ENCODE measurements at regions of chr20 and their contacts with region 1.

Region 1: GRCh38 chr20:59087829-59088433 is 45.3 kb upstream of the PRELID3B start:
- DNase-seq: peak; percentile 84
- H3K4me3 Mint-ChIP-seq: no peak overlapping the region
- H3K27ac Mint-ChIP-seq: no peak overlapping the region
- H3K4me1 Mint-ChIP-seq: peaks cover 3% of the 10 kb centered on the region
- H3K27me3 Mint-ChIP-seq: peaks cover 18% of the 10 kb centered on the region

Region 2: GRCh38 chr20:59120491-59120890 is 32.6 kb after region 1 on chr20:
- CTCF ChIA-PET with region 1: interaction called, 19 read pairs
- POLR2A ChIA-PET with region 1: no interaction called
- DNase-seq: peak; percentile 37
- H3K4me3 Mint-ChIP-seq: no peak overlapping the region
- H3K27ac Mint-ChIP-seq: no peak overlapping the region
- H3K4me1 Mint-ChIP-seq: peaks cover 52% of the 10 kb centered on the region
- H3K27me3 Mint-ChIP-seq: peaks cover 15% of the 10 kb centered on the region

Region 3: GRCh38 chr20:59177261-59178250 is 89.6 kb after region 1 on chr20:
- CTCF ChIA-PET with region 1: interaction called, 11 read pairs
- POLR2A ChIA-PET with region 1: no interaction called
- DNase-seq: peak; percentile 63
- H3K4me3 Mint-ChIP-seq: peak overlapping the region; percentile 44
- H3K27ac Mint-ChIP-seq: peak overlapping the region; percentile 84
- H3K4me1 Mint-ChIP-seq: peaks cover 80% of the 10 kb centered on the region
- H3K27me3 Mint-ChIP-seq: no peaks in the 10 kb centered on the region

Region 4: DNA sequence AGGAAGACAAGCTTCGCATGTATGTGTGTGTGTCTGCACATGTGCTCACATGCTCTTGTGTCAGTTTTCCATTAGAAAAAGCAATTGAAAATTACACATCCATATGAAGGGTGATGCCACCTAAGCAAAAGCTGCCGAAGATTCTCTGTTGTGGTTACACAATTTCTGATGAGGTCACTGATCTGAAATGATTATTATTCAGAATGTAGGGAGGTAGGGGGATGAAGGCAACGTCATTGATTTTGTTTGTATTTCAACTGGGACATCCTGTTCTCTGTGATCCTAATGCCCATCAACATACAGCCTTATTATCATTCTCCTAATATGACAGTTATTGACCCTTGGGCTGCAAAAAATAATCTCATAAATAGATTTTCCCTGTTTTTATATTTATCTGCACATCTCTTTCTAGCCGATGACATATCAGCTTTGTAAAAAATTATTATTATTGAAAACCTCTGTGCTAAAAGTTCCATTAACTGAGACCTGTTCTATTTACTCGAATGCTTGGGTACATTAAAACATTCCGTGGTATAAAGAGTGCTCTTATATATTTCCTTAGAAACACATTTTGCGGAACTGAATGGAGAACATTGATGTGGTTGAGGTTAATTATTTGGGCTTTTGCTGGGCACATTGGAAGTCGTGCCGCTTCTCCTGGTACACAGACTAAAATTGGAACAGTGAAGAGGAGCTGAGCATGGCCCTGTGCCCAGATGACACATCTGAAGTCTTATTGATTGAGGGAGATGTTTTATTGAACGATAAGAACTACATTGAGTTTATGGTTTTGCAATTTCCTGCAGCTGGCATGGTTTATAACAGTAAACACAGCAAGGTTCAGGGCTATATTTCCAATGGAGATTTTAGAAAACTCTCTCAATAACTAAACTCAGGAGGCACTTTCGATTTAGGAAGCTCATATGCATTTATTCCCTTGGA is 126.9 kb after region 1 on chr20:
- CTCF ChIA-PET with region 1: interaction called, 137 read pairs
- POLR2A ChIA-PET with region 1: no interaction called
- DNase-seq: no peak
- H3K4me3 Mint-ChIP-seq: no peak overlapping the region
- H3K27ac Mint-ChIP-seq: no peak overlapping the region
- H3K4me1 Mint-ChIP-seq: no peaks in the 10 kb centered on the region
- H3K27me3 Mint-ChIP-seq: no peaks in the 10 kb centered on the region

Region 5: DNA sequence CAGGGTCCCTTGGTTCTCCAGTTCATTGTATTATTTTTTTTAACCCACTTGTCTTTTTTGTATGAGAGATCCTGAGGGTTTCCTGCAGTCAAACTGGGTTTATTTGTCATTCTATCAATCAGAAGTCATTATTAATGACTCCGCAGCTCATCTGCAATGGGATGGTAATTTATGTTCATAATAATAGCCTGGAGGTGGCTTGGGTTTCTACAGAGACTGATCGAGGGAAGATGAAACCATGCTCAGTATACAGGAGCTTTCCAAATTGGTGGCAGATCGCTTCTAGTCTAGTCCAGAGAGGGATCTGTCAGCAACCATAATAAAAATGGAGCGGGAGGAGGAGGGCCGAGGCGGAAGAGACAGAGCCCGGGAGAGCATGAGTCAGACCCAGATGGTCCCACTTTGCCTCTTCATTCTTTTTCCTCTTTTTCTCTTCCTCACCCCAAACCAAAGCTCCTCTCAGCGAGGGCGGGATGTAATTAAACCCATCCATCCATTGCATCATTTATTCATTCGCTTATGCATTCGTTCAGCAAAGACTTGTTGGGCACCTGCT is 235.0 kb after region 1 on chr20:
- CTCF ChIA-PET with region 1: no interaction called
- POLR2A ChIA-PET with region 1: no interaction called
- DNase-seq: no peak
- H3K4me3 Mint-ChIP-seq: no peak overlapping the region
- H3K27ac Mint-ChIP-seq: no peak overlapping the region
- H3K4me1 Mint-ChIP-seq: no peaks in the 10 kb centered on the region
- H3K27me3 Mint-ChIP-seq: peaks cover 4% of the 10 kb centered on the region

Region 6: GRCh38 chr20:59428051-59428830 is 340.3 kb after region 1 on chr20:
- CTCF ChIA-PET with region 1: no interaction called
- POLR2A ChIA-PET with region 1: no interaction called
- DNase-seq: no peak
- H3K4me3 Mint-ChIP-seq: no peak overlapping the region
- H3K27ac Mint-ChIP-seq: no peak overlapping the region
- H3K4me1 Mint-ChIP-seq: peaks cover 14% of the 10 kb centered on the region
- H3K27me3 Mint-ChIP-seq: peaks cover 2% of the 10 kb centered on the region

Region 7: DNA sequence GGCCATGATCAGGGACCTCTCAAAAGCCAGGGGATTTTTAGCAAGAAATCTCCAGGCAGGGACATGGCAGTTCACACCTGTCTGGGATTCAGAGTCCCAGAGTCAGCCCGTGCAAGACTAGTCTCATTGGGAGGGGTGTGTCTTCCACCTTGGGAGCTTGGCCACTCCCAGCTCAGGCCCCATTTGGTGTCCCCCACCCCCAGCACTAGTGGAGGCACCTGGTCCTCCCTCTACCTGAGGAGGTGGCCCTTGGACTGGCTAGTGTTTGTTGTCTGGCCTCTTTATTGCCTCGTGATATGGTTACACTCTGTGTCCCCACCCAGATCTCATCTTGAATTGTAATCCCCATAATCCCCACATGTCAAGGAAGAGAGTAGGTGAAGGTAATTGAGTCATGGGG is 375.6 kb after region 1 on chr20:
- CTCF ChIA-PET with region 1: no interaction called
- POLR2A ChIA-PET with region 1: no interaction called
- DNase-seq: no peak
- H3K4me3 Mint-ChIP-seq: no peak overlapping the region
- H3K27ac Mint-ChIP-seq: no peak overlapping the region
- H3K4me1 Mint-ChIP-seq: no peaks in the 10 kb centered on the region
- H3K27me3 Mint-ChIP-seq: no peaks in the 10 kb centered on the region

Measured in activated CD4-positive, alpha-beta memory T cell treated with anti-CD3 and anti-CD28 coated beads, Interleukin-2, amount 10 ng/mL, durations not matched to agents 7 days and 5 days (primary cell).